ENCODE measurements at regions of chr2 and their contacts with region 1.

Region 1: DNA sequence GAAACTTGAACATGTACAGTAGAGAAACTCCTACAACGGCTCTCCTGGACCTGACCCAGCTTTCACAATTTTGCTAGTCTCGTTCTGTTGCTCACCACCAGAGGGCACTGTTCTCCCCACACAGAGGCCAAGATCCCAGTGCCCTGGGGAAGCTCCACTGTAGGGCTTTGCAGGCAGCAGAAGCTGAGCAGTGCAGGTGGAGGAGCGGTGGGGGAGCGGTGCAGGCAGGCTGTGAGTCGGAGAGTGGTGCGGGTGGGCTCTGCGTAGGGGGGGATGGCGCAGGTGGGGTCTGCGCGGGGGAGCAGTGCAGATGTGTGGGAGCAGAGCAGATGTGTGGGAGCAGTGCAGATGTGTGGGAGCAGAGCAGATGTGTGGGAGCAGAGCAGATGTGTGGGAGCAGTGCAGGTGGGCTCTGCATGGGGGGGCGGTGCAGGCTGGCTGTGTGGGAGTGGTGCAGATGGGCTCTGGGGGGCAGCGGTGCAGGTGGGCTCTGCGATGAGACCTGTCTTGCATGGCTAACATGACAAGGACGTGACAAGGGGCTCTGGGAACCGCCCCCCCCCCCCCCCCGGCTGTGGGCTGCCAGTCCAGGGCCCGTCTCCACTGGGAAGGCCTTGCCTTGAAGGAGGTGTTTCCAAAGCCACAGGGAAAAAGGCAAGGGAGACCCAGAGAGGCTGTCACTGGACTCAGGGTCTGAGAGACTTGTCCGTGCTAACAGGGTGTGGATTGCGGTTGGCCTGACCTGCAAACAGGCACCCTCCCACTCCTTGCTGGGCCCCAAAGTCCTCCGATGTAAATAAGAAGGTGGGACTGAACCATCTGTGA is 7.3 kb downstream of the CYS1 start:
- DNase-seq: peak; percentile 90
- H3K4me3 ChIP-seq: no peak overlapping the region
- H3K27ac ChIP-seq: no peak overlapping the region
- H3K4me1 ChIP-seq: peaks cover 0 to 11% (median 6%) of the 10 kb centered on the region in 6 donors
- H3K27me3 ChIP-seq: peaks cover 0 to 52% (median 4%) of the 10 kb centered on the region in 7 donors
- CTCF ChIP-seq: peak; percentile 67 to 90 (median 85)
- POLR2A ChIP-seq: no peak

Region 2: DNA sequence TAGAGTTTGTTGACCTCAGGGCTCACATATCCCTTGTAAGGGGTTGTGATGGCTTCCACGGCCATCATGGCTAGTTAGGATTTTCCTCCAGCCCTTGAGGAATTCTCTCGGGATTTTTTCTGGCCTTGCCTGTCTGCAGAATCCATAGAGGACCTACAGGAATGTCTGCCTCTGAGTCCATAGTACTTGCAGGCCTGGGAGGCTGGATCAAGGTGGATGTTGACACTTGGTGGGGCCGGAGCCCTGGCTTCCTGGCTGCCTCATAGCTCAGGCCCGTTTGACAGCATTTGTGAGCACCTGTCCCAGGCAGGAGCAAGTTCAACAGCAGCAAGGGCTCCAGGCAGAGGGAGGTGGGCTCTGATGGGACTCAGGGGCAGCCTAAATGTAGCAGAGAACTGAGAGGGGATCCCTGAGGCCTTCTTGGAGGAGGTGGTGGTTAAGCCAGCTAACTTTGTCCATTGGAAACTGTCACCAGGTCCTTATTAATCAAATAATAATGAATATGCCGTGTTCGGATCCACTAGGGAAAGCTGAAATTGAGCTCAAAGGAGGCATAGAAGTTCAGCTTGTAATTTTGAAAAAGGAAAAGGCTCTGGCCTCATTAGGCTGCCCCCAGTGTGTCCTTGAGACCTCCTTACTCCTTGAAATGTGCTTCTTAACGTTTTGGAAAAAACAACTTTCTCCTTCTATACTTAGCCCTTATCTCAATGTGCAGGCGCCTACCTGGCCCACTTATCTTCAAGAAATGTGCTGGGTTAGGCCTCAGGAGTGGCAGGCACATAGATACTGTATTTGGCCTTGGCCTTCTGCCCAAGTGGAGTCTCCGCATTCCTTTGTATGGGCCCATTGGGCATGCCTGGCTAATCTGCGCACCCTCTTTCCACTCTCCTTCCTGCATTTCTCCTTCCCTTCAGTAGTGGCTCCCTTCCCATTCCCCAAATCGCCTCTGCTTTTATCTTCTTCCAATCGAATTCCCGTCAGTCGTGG is 296.7 kb after region 1 on chr2:
- intact Hi-C with region 1: no loop called
- DNase-seq: no peak
- H3K4me3 ChIP-seq: no peak overlapping the region
- H3K27ac ChIP-seq: no peak overlapping the region
- H3K4me1 ChIP-seq: peaks cover 0 to 76% (median 18%) of the 10 kb centered on the region in 6 donors
- H3K27me3 ChIP-seq: no peaks in the 10 kb centered on the region
- CTCF ChIP-seq: no peak
- POLR2A ChIP-seq: no peak

Region 3: DNA sequence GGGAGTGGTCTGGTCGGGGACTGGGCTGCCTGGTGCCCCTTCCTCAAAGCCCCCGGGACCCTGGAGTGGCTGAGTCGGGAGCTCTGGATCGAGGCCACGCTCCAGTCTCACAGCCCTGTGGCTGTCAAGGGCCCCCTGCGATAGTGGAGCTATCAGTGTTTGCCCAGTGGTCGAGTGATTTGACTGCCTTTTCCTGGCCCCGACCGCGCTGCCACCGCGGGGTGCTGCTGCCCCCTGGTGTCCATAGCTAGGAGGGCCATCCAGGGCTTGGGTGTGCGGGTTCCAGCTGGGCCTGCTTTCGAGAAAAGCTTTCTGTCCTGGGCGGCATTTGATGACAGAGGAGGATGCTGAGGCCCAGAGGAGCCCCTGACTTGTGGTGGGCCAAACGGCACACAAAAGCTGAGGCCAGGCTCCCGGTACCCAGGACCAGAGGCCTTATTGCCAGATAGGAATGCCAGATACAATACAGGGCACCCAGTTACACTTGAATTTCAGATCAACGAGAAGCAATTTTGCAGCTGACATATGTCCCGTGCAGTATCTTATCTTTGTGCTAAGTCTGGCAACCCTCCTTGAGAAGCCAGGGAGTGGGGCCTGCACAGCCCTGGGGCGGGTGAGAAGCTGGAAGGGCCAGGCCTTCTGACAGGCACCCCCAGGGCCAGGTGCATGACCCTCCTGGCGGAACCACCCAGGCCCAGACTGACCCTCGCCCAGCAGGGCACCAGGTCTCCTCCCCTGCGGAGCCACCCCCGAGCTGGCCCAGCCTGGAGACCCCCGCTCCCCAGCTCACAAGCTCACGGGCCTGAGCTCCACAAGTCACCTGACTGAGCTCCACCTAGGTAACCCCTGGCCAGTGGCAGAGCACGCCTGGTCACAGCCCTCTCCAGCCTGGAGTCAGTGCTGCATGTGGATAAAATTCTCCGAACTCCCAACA is 362.3 kb after region 1 on chr2:
- intact Hi-C with region 1: loop called (anchors 5 kb)
- DNase-seq: peak; percentile 95
- H3K4me3 ChIP-seq: no peak overlapping the region
- H3K27ac ChIP-seq: peak overlapping the region in 1 of 8 donors; percentile 4
- H3K4me1 ChIP-seq: peaks cover 0 to 37% (median 29%) of the 10 kb centered on the region in 6 donors
- H3K27me3 ChIP-seq: peaks cover 0 to 20% (median 0%) of the 10 kb centered on the region in 7 donors
- CTCF ChIP-seq: peak; percentile 95 to 99 (median 98)
- POLR2A ChIP-seq: no peak

Region 4: GRCh38 chr2:10659898-10660568 is 587.2 kb after region 1 on chr2:
- intact Hi-C with region 1: loop called (anchors 10 kb)
- DNase-seq: no peak
- H3K4me3 ChIP-seq: no peak overlapping the region
- H3K27ac ChIP-seq: no peak overlapping the region
- H3K4me1 ChIP-seq: peaks cover 0 to 7% (median 0%) of the 10 kb centered on the region in 6 donors
- H3K27me3 ChIP-seq: no peaks in the 10 kb centered on the region
- CTCF ChIP-seq: peak; percentile 14 to 69 (median 56)
- POLR2A ChIP-seq: no peak